Mammary epithelial cell (primary cell): ENCODE measurements at regions of chr10 and their contacts with region 1.

Region 1: DNA sequence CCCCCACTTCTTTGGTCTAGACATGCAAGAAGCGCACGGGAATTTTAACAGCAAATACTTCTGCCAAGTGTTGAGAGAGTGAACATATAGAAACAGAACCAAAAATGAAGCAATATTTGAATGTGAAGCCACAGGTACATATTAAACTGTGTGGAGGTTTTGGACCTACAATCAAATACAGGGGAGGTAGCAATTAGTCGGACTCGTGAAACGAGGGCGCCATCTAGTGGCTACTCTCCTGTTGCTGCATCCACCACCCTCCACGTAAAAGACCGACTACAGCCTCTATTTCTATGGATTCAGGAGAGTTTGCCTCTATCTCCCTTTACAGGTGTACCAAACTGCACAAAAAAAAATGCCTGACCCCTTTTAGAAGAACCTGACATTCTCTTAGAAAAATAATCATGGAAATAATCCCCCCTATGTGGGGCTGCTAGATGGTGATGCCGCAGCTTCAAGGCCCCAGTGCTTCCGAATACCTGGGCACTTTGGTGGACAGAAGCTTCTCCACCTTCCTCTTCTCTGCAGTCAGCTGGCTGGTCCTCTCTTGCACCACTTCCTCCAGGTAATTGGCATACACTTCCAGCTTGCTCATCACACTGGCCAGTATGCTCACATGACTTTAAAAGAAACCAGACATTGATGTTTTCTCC is 31.7 kb downstream of the TECTB start:
- DNase-seq: peak; percentile 41
- H3K4me3 ChIP-seq: no peak overlapping the region
- H3K27ac ChIP-seq: no peak overlapping the region
- H3K4me1 ChIP-seq: no peaks in the 10 kb centered on the region
- H3K27me3 ChIP-seq: no peaks in the 10 kb centered on the region
- CTCF ChIP-seq: peak; percentile 83 to 86

Region 2: DNA sequence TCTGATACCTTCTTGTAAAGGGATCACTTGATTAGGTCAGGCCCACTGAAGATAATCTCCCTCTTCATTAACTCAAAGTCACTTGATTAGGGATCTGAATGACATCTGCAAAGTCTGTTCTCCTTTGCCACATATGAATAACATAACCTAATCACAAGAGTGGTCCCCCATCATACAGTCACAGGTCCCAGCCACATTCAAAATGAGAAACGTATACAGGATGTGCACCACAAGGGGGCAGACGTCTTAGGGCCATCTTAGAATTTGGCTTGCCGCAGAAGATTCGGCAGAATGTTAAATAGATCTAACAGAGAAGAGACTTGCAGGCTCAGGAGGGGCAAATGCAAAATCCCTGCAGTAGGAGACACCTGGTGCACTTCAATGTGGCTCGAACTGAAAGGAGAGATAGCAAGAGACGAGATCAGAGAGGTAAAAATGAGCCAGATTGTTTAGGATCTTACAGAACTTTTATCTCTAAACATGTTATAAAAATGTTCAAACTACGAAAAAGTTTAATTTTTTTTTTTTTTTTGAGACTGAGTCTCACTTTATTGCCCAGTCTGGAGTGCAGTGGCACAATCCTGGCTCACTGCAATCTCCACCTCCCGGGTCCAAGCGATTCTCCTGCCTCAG is 1757.9 kb before region 1 on chr10:
- CTCF ChIA-PET with region 1: no interaction called
- dilution Hi-C with region 1: no loop called
- in situ Hi-C with region 1: no loop called
- intact Hi-C with region 1: loop called (anchors 10 kb)
- DNase-seq: no peak
- H3K4me3 ChIP-seq: no peak overlapping the region
- H3K27ac ChIP-seq: no peak overlapping the region
- H3K4me1 ChIP-seq: no peaks in the 10 kb centered on the region
- H3K27me3 ChIP-seq: no peaks in the 10 kb centered on the region
- CTCF ChIP-seq: peak; percentile 40 to 61

Region 3: GRCh38 chr10:111076191-111076681 is 1238.7 kb before region 1 on chr10:
- CTCF ChIA-PET with region 1: no interaction called
- dilution Hi-C with region 1: no loop called
- in situ Hi-C with region 1: no loop called
- intact Hi-C with region 1: loop called (anchors 2 kb)
- DNase-seq: peak; percentile 37
- H3K4me3 ChIP-seq: peak overlapping the region; percentile 45 to 56 (median 46)
- H3K27ac ChIP-seq: no peak overlapping the region
- H3K4me1 ChIP-seq: peaks cover 21% of the 10 kb centered on the region
- H3K27me3 ChIP-seq: peaks cover 32% of the 10 kb centered on the region
- CTCF ChIP-seq: peak; percentile 55 to 86

Region 4: GRCh38 chr10:111756217-111757061 is 558.5 kb before region 1 on chr10:
- CTCF ChIA-PET with region 1: no interaction called
- dilution Hi-C with region 1: no loop called
- in situ Hi-C with region 1: no loop called
- intact Hi-C with region 1: loop called (anchors 2 kb)
- DNase-seq: peak; percentile 0
- H3K4me3 ChIP-seq: no peak overlapping the region
- H3K27ac ChIP-seq: no peak overlapping the region
- H3K4me1 ChIP-seq: no peaks in the 10 kb centered on the region
- H3K27me3 ChIP-seq: no peaks in the 10 kb centered on the region
- CTCF ChIP-seq: peak; percentile 16 to 52

Region 5: GRCh38 chr10:112140110-112140970 is 174.6 kb before region 1 on chr10:
- CTCF ChIA-PET with region 1: no interaction called
- dilution Hi-C with region 1: loop called (anchors 25 kb)
- in situ Hi-C with region 1: loop called in 1 of 2 experiments (anchors 5 kb)
- intact Hi-C with region 1: loop called (anchors 1 kb)
- DNase-seq: peak; percentile 64
- H3K4me3 ChIP-seq: no peak overlapping the region
- H3K27ac ChIP-seq: no peak overlapping the region
- H3K4me1 ChIP-seq: no peaks in the 10 kb centered on the region
- H3K27me3 ChIP-seq: no peaks in the 10 kb centered on the region
- CTCF ChIP-seq: peak; percentile 90 to 91

Region 6: DNA sequence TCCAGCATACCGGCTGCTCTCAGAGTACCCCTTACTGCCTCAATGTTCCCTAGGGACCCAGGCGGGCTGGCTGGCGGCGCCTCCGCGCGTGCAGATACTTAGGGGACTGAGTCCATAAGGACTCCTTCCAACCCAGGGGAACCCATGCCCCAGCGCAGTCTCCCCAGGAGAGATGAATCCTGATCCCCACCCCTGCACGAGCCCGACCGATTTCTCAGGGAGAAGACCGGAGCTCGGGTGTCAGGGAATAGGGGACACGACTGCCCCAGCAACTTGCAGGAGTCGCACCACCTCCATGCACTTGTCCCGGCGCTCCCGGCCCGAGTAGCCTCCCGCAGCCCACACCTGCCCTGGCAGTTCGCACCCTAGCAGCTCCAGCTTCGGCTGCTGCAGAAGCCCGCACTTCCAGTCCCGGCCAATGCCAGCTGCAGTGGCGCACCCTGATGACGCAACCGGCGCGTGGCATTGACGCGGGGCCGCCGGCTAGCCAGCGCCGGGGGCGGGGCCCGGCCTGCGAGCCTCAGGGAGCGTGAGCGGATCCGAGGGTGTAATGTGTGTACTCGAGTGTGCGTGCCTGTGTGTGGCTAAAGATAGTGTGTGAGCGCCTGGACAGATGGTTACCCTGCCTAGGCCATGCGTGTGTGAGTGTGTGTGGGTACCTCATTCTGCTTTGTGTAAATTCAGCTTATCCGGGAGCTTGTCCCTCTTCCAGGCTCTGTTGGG is 131.5 kb before region 1 on chr10 and contains the start of gene GPAM:
- CTCF ChIA-PET with region 1: no interaction called
- dilution Hi-C with region 1: no loop called
- in situ Hi-C with region 1: no loop called
- intact Hi-C with region 1: no loop called
- DNase-seq: peak; percentile 89
- H3K4me3 ChIP-seq: peak within 1 kb of the TSS; percentile 76 to 92 (median 82)
- H3K27ac ChIP-seq: peak within 1 kb of the TSS; percentile 81
- H3K4me1 ChIP-seq: peaks cover 11% of the 10 kb centered on the region
- H3K27me3 ChIP-seq: no peaks in the 10 kb centered on the region
- CTCF ChIP-seq: no peak
- total RNA-seq, gene GPAM: 9.5 to 17.5 TPM

Region 7: GRCh38 chr10:112471878-112472487 is 157.0 kb after region 1 on chr10:
- CTCF ChIA-PET with region 1: no interaction called
- dilution Hi-C with region 1: no loop called
- in situ Hi-C with region 1: no loop called
- intact Hi-C with region 1: loop called (anchors 1 kb)
- DNase-seq: peak; percentile 28
- H3K4me3 ChIP-seq: no peak overlapping the region
- H3K27ac ChIP-seq: no peak overlapping the region
- H3K4me1 ChIP-seq: no peaks in the 10 kb centered on the region
- H3K27me3 ChIP-seq: no peaks in the 10 kb centered on the region
- CTCF ChIP-seq: peak; percentile 67 to 68